ENCODE measurements at regions of chr12 and their contacts with region 1.

Region 1: GRCh38 chr12:7219599-7220243 is 30.2 kb downstream of the PEX5 start:
- DNase-seq: peak; percentile 75
- ATAC-seq: peak; percentile 82
- H3K4me3 ChIP-seq: no peak overlapping the region
- H3K27ac ChIP-seq: no peak overlapping the region
- H3K4me1 ChIP-seq: no peaks in the 10 kb centered on the region; a peak in 1 of 4 replicates
- H3K27me3 ChIP-seq: no peaks in the 10 kb centered on the region
- CTCF ChIP-seq: peak; percentile 82 to 95 (median 93)
- POLR2A ChIP-seq: no peak
- RAD21 ChIP-seq: peak; percentile 98

Region 2: DNA sequence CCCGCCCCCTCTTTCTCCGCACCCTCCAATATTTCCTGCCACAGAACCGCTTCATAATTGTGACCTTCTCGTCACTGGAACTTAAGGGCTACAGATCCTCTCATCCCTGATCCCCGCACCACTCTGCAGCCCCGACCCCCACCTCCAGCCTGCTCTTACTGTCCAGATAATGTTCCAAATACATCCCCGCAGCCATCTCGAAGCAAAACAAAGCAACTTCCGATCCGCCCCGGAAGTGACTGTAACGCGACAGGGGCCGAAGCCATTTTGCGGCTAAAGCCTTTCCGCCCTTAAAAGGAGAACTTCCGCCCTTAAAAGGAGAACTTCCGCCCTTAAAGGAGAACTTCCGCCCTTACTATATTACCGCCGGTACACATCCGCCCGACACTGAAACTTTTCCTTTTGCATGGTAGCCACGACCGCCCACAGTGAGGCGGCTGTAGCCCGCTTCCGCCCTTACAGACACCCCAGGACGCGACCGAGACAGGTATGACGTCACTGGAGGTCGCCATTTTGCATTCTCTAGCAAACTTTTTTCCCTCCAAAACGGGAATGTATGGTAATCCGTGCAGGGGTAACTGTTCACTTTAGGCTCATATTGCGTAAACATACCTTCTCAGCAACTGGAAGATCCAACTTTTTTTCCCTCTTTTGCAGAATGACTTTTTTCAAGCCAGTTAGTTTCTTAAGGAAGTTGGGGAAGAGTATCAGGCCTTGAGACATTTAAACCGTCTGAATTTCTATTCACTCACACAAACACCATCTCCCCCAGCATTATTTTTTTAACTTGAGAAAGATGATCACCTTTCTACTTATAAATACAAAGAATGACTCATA is 556.6 kb before region 1 on chr12 and contains the start of gene ING4:
- CTCF ChIA-PET with region 1: no interaction called
- POLR2A ChIA-PET with region 1: no interaction called
- RAD21 ChIA-PET with region 1: no interaction called
- intact Hi-C with region 1: no loop called
- DNase-seq: peak; percentile 99
- ATAC-seq: peak; percentile 98
- H3K4me3 ChIP-seq: peak within 1 kb of the TSS; percentile 68 to 91
- H3K27ac ChIP-seq: peak within 1 kb of the TSS; percentile 67
- H3K4me1 ChIP-seq: peaks cover 10 to 14% of the 10 kb centered on the region in 2 experiments; a peak in 3 of 4 replicates
- H3K27me3 ChIP-seq: no peaks in the 10 kb centered on the region
- CTCF ChIP-seq: no peak
- POLR2A ChIP-seq: no peak
- RAD21 ChIP-seq: no peak
- total RNA-seq, gene ING4: 17.9 TPM

Region 3: GRCh38 chr12:7374423-7375144 is 154.9 kb after region 1 on chr12:
- CTCF ChIA-PET with region 1: no interaction called
- POLR2A ChIA-PET with region 1: no interaction called
- RAD21 ChIA-PET with region 1: no interaction called
- intact Hi-C with region 1: loop called (anchors 5 kb)
- DNase-seq: peak; percentile 47
- ATAC-seq: peak; percentile 96
- H3K4me3 ChIP-seq: no peak overlapping the region
- H3K27ac ChIP-seq: no peak overlapping the region
- H3K4me1 ChIP-seq: peaks cover 2 to 16% of the 10 kb centered on the region in 2 experiments; a peak in 2 of 4 replicates
- H3K27me3 ChIP-seq: no peaks in the 10 kb centered on the region
- CTCF ChIP-seq: peak; percentile 59 to 82 (median 78); a peak in 5 of 6 replicates
- POLR2A ChIP-seq: no peak
- RAD21 ChIP-seq: peak; percentile 77

Region 4: DNA sequence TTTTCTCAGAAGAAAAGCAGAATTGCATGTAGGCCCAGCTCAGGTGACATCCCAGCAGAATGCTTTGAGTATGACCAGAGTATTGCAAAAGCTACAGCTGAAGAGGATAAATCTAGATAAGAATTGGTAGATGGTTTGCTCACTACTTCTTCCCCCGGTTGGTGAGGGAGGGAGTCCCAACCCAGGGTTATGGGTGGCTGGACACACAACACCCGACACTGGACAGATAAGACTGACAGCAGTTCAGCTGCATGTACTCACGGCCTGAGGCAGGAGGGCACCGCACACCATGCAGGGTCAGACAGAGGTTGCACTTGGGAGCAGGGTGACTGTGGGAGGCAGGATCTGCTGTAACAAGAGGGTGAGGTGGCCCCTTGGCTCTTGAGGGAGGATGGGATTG is 529.1 kb after region 1 on chr12:
- CTCF ChIA-PET with region 1: no interaction called
- POLR2A ChIA-PET with region 1: no interaction called
- RAD21 ChIA-PET with region 1: no interaction called
- intact Hi-C with region 1: no loop called
- DNase-seq: no peak
- ATAC-seq: no peak
- H3K4me3 ChIP-seq: no peak overlapping the region
- H3K27ac ChIP-seq: no peak overlapping the region
- H3K4me1 ChIP-seq: no peaks in the 10 kb centered on the region
- H3K27me3 ChIP-seq: no peaks in the 10 kb centered on the region
- CTCF ChIP-seq: no peak
- POLR2A ChIP-seq: no peak
- RAD21 ChIP-seq: no peak

Measured in HCT116 (cell line).